WTC11 (cell line): ENCODE measurements at regions of chr7 and their contacts with region 1.

Region 1: GRCh38 chr7:134140889-134141867 is 14.0 kb downstream of the LRGUK start:
- DNase-seq: peak; percentile 90
- ATAC-seq: peak; percentile 92
- H3K4me3 Mint-ChIP-seq: peak overlapping the region; percentile 48
- H3K27ac Mint-ChIP-seq: peak overlapping the region; percentile 78
- H3K4me1 Mint-ChIP-seq: peaks cover 29% of the 10 kb centered on the region
- H3K27me3 Mint-ChIP-seq: no peaks in the 10 kb centered on the region
- CTCF ChIP-seq: peak; percentile 92

Region 2: DNA sequence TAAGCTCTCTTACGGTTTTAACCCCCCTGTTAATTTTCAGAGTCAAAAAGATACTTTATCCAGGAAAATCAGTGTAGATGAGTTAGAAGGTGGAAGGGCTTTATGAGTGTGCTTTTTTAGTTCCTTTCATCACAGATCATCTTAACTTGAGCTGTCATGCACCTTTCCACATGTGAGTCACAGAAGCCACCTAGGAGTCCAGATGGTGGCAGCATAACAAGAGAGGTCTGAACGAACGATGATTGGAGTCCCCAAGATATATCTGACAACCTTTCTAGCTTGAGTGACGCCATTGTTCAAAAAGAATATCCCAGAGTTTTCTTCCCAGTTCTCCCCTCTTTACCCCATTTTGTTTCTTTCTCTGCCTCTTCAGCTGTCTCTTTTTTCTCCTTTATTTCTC is 130.1 kb before region 1 on chr7:
- CTCF ChIA-PET with region 1: interaction called, 28 read pairs
- POLR2A ChIA-PET with region 1: no interaction called
- DNase-seq: no peak
- ATAC-seq: no peak
- H3K4me3 Mint-ChIP-seq: no peak overlapping the region
- H3K27ac Mint-ChIP-seq: no peak overlapping the region
- H3K4me1 Mint-ChIP-seq: peaks cover 4% of the 10 kb centered on the region; the same call in 1 of the 2 replicates
- H3K27me3 Mint-ChIP-seq: no peaks in the 10 kb centered on the region
- CTCF ChIP-seq: no peak

Region 3: DNA sequence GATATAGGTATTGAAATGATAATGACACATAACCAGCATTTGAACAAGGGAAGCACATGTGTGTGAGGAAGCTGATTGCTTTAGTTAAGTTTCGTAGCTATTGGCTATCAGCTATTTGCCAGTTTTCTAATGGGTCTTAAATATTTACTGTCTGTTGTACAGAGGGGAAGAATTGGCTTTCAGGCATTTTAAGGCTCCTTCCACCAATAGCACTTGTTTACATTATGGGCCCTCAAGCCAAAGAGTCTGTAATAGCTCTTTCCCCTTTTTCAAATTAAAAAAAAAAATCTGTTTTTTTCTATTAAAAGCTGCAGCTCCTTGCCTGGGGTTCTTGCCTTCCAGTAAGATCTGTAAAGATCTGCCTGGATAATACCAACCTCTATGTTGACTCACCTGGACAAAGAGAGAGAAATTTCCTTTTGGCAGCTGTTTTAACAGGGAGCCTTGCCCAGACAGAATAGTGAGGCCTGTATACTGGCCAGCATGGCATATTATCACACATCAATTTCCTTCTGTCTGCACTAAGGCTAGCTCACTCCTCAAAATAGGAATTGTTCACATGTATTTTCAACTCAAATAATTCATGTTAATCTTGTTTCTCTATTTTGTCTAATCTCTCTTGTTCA is 118.8 kb before region 1 on chr7:
- CTCF ChIA-PET with region 1: interaction called, 29 read pairs
- POLR2A ChIA-PET with region 1: interaction called, 3 read pairs
- DNase-seq: no peak
- ATAC-seq: no peak
- H3K4me3 Mint-ChIP-seq: no peak overlapping the region
- H3K27ac Mint-ChIP-seq: no peak overlapping the region
- H3K4me1 Mint-ChIP-seq: peaks cover 41% of the 10 kb centered on the region
- H3K27me3 Mint-ChIP-seq: peaks cover 7% of the 10 kb centered on the region
- CTCF ChIP-seq: no peak

Region 4: DNA sequence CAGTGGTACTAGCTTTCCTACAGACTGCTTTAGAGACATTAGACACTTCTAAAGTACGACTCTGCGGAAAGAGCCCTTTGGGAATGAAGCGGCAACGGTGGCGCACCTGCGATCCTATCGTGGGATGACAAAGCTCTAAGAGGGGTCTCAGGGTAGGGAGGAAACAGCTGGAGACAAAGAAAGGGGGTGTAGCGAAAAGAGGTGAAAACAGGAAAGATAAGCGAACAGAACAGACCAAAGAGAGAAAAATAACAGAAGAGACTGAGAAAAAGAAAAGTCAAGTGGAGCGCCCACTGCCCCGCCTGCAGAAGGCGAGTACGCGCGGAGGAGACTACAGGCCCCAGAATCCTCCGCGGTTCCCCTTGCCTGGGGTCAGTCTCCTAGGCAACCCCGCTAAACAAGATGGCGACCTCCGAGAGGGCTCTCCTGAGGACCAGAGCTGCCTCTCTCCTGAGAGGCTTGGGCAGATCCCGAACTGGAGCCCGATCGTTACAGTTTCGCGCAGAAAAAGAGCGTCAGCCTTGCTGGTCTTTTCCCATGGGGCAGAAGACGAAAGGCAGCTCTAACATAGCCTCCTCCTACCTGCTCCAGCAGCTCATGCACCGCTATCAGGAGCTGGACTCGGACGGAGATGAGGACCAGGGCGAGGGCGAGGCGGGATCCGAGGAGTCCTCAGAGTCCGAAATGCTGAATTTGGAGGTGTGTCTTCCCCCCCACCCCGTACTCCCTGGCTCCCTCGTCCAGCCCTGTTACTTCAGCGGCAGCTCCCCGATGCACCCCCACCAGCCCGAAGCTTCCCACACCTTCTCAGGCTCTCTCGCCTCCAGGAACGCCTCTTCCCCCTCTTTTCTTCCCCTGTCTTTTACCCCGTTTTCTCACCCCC is 14.0 kb before region 1 on chr7 and contains the start of gene LRGUK:
- CTCF ChIA-PET with region 1: interaction called, 34 read pairs
- POLR2A ChIA-PET with region 1: interaction called, 3 read pairs
- DNase-seq: peak; percentile 87
- ATAC-seq: peak; percentile 98
- H3K4me3 Mint-ChIP-seq: peak within 1 kb of the TSS; percentile 88
- H3K27ac Mint-ChIP-seq: no peak within 1 kb of the TSS; the same call in 1 of the 2 replicates
- H3K4me1 Mint-ChIP-seq: peaks cover 53% of the 10 kb centered on the region
- H3K27me3 Mint-ChIP-seq: no peaks in the 10 kb centered on the region; the same call in 1 of the 2 replicates
- CTCF ChIP-seq: no peak
- total RNA-seq, gene LRGUK: 1.9 to 3.0 TPM (median 2.7 TPM) in 3 replicates

Region 5: GRCh38 chr7:134316539-134317344 is 175.6 kb after region 1 on chr7 and contains the start of gene SLC35B4:
- CTCF ChIA-PET with region 1: interaction called, 14 read pairs
- POLR2A ChIA-PET with region 1: no interaction called
- DNase-seq: peak; percentile 98
- ATAC-seq: peak; percentile 99
- H3K4me3 Mint-ChIP-seq: peak within 1 kb of the TSS; percentile 87
- H3K27ac Mint-ChIP-seq: peak within 1 kb of the TSS; percentile 5
- H3K4me1 Mint-ChIP-seq: peaks cover 14% of the 10 kb centered on the region
- H3K27me3 Mint-ChIP-seq: peaks cover 15% of the 10 kb centered on the region
- CTCF ChIP-seq: no peak
- total RNA-seq, gene SLC35B4: 31.5 to 35.5 TPM (median 32.6 TPM) in 3 replicates

Region 6: DNA sequence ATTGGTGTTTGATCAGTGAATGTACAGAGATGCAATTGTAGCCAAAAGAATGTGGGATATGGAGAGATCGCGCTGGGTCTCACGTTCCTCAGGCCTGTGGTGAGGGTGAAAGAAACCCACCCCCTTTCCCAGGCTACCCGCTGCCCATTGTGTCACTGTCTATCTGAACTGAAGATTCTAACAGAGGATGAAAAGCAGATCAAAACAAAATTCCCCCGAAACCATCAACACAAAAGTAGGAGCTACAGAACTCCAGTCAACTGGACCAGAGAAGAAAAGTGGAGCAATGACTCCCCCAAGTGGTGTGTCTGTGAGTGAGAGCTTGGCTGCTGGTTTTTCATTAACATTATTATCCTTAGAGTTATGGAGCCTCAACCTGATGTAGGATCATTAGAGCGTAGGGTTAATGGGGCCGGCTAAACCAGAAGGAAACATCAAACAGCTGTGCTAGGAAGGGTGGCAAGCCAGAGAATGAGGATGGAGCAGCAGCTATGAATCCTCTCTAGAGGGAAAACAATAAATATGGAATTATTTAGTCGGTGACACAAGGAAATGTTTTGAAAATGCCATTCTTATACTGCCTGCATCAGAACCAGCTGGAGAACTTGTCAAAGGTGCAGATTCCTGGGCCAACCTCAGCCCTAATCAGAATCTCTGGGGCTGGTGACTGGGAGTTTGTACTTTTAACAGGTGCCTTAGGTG is 279.4 kb after region 1 on chr7:
- CTCF ChIA-PET with region 1: interaction called, 16 read pairs
- POLR2A ChIA-PET with region 1: no interaction called
- DNase-seq: peak; percentile 58
- ATAC-seq: peak; percentile 95
- H3K4me3 Mint-ChIP-seq: no peak overlapping the region
- H3K27ac Mint-ChIP-seq: no peak overlapping the region
- H3K4me1 Mint-ChIP-seq: peaks cover 10% of the 10 kb centered on the region
- H3K27me3 Mint-ChIP-seq: no peaks in the 10 kb centered on the region
- CTCF ChIP-seq: 0 out of 2 replicates have a peak, but pooled peaks have one; percentile 17